Activated B cell treated with CpG ODN at 0.5 μM for 24 hours (primary cell): ENCODE measurements at regions of chrX and their contacts with region 1.

Region 1: DNA sequence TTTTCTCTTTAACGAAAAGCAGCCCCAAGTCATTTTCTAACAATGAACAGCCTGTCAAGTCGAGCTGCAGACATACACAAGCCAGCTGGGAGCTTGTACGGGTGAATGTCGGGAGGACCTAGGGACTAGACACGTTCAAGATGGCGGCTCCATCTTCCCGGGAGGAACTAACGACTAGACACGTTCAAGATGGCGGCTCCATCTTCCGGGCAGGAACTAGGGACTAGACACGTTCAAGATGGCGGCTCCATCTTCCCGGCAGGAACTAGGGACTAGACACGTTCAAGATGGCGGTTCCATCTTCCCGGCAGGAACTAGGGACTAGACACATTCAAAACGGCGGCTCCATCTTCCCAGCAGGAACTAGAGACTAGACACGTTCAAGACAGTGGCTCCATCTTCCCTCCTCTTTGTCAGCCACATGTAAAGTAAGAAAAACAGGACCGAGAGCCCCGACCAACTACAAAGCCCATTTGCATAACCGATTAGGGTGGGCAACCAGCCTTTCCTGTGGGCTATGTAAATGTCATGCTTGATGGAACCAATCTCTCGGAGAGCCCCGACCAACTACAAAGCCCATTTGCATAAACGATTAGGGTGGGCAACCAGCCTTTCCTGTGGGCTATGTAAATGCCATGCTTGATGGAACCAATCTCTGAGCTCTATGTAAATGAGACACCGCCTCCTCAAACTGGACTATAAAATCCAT is 175.5 kb downstream of the DHRSX start:
- DNase-seq: no peak
- ATAC-seq: peak; percentile 68
- H3K4me3 Mint-ChIP-seq: peak overlapping the region; percentile 83
- H3K27ac Mint-ChIP-seq: peak overlapping the region; percentile 87
- H3K4me1 Mint-ChIP-seq: peaks cover 46% of the 10 kb centered on the region
- H3K27me3 Mint-ChIP-seq: no peaks in the 10 kb centered on the region
- CTCF ChIP-seq: no peak

Region 2: GRCh38 chrX:2311501-2311900 is 13.7 kb before region 1 on chrX:
- CTCF ChIA-PET with region 1: no interaction called
- POLR2A ChIA-PET with region 1: no interaction called
- intact Hi-C with region 1: no loop called
- DNase-seq: no peak
- ATAC-seq: no peak
- H3K4me3 Mint-ChIP-seq: no peak overlapping the region
- H3K27ac Mint-ChIP-seq: no peak overlapping the region
- H3K4me1 Mint-ChIP-seq: peaks cover 3% of the 10 kb centered on the region
- H3K27me3 Mint-ChIP-seq: no peaks in the 10 kb centered on the region
- CTCF ChIP-seq: no peak

Region 3: GRCh38 chrX:2342874-2343273 is 17.6 kb after region 1 on chrX:
- CTCF ChIA-PET with region 1: no interaction called
- POLR2A ChIA-PET with region 1: no interaction called
- intact Hi-C with region 1: loop called (anchors 2 kb)
- DNase-seq: no peak
- ATAC-seq: no peak
- H3K4me3 Mint-ChIP-seq: no peak overlapping the region
- H3K27ac Mint-ChIP-seq: no peak overlapping the region
- H3K4me1 Mint-ChIP-seq: peaks cover 22% of the 10 kb centered on the region
- H3K27me3 Mint-ChIP-seq: no peaks in the 10 kb centered on the region
- CTCF ChIP-seq: no peak